ENCODE measurements at regions of chr3 and their contacts with region 1.

Region 1: DNA sequence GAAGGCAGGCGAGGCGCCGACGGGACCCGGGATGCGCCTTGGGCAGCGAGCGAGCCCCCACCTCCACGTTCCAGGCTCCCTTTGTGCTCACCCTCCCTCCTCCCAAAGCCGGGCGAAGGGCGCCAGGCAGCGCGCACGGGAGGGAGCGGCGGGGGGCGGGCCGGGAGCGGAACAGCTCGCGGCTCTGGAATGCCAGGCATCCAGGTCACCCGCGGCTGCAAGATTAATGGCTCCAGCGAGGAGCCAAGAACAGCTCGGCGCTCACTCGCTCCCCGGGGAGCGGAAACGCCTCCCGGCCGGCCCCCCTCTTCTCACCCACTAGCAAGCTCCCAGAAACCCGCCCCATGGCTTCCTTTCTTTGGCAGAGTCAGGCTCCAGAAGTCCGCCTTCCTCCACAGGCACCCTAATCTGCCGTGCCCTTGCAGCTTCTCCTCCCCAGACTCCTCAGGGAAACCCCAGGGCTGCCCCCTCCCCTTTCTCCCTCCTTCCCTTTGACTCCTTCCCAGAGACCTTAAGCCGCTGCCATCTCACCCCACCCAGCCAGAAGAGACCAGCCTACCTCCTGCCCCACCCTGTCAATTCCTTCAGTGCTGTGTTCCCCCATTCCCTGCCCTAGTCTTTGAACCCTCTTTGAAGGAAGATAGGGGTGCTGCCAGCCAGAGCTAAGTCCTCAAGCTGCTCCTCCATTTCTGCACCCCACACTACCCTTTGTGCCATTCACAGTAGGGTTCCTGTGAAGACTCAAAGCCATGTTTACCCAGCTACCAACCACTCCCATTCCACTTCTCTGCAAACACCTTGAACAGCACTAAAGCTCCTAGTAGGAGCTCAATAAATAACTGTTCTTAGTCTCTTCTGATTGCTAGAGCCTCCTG is 9.9 kb downstream of the AMOTL2 start:
- DNase-seq: peak; percentile 99
- H3K4me3 Mint-ChIP-seq: peak overlapping the region; percentile 43
- H3K27ac Mint-ChIP-seq: peak overlapping the region; percentile 53
- H3K4me1 Mint-ChIP-seq: peaks cover 70% of the 10 kb centered on the region
- H3K27me3 Mint-ChIP-seq: no peaks in the 10 kb centered on the region
- CTCF ChIP-seq: no peak

Region 2: GRCh38 chr3:134134240-134134639 is 230.1 kb before region 1 on chr3:
- CTCF ChIA-PET with region 1: no interaction called
- intact Hi-C with region 1: no loop called
- DNase-seq: no peak
- H3K4me3 Mint-ChIP-seq: no peak overlapping the region
- H3K27ac Mint-ChIP-seq: no peak overlapping the region
- H3K4me1 Mint-ChIP-seq: peaks cover 7% of the 10 kb centered on the region
- H3K27me3 Mint-ChIP-seq: no peaks in the 10 kb centered on the region
- CTCF ChIP-seq: no peak

Region 3: DNA sequence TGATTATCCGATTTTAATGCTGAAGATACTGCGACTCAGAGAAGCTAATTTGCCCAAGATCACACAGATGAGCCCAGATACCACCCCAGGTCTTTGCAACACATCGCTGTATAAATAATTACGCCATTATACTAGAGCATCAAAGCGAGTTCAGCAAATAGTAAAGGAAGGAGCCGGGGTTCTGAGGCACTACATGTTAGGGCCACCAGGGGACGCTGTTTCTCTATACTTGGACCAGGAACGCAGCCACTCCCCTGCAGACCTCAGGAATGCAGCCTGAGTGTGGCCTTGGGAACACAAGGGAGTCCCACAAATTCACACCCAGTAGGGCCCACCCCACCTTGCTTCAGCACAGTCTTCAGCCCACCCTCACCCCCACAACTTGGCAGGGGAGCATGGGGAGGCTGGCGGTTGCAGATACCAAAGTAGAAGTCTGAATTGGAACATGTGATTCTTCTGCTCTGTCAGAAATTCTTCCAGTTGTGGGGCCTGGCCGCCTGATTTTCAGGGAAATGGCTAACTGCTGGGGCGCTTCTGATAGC is 55.9 kb before region 1 on chr3:
- CTCF ChIA-PET with region 1: interaction called, 15 read pairs
- intact Hi-C with region 1: loop called (anchors 2 kb)
- DNase-seq: peak; percentile 95
- H3K4me3 Mint-ChIP-seq: peak overlapping the region; percentile 42
- H3K27ac Mint-ChIP-seq: peak overlapping the region; percentile 18
- H3K4me1 Mint-ChIP-seq: peaks cover 44% of the 10 kb centered on the region
- H3K27me3 Mint-ChIP-seq: peaks cover 14% of the 10 kb centered on the region
- CTCF ChIP-seq: peak; percentile 100

Region 4: GRCh38 chr3:134315286-134316106 is 48.8 kb before region 1 on chr3:
- CTCF ChIA-PET with region 1: interaction called, 15 read pairs
- intact Hi-C with region 1: loop called (anchors 2 kb)
- DNase-seq: no peak
- H3K4me3 Mint-ChIP-seq: no peak overlapping the region
- H3K27ac Mint-ChIP-seq: peak overlapping the region; percentile 51
- H3K4me1 Mint-ChIP-seq: peaks cover 68% of the 10 kb centered on the region
- H3K27me3 Mint-ChIP-seq: no peaks in the 10 kb centered on the region
- CTCF ChIP-seq: no peak

Region 5: DNA sequence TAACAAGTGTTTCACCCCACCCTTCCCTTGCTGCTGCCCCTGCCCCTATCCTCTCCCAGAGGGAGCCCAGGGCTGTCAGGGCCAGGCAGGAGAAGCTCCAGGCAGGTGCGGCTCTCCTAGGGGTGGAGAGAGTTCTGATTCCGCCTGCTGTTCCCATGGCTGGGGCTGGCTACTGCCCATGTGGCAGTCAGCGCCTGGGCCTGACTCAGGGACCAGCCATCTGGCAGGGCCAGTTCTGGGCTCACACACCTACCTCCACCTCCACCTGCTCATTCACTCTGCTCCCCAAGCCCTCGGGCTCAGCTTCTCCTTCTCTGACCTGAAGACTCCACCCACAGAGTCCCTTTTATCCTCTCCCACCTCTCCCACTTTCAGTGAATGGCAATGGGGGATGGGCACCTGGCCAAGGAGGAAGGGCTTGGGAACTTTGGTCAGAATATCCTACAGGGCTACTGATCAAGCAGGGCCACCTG is 13.4 kb before region 1 on chr3:
- CTCF ChIA-PET with region 1: interaction called, 15 read pairs
- intact Hi-C with region 1: no loop called
- DNase-seq: peak; percentile 93
- H3K4me3 Mint-ChIP-seq: peak overlapping the region; percentile 11
- H3K27ac Mint-ChIP-seq: peak overlapping the region; percentile 90
- H3K4me1 Mint-ChIP-seq: peaks cover 83% of the 10 kb centered on the region
- H3K27me3 Mint-ChIP-seq: no peaks in the 10 kb centered on the region
- CTCF ChIP-seq: no peak

Region 6: DNA sequence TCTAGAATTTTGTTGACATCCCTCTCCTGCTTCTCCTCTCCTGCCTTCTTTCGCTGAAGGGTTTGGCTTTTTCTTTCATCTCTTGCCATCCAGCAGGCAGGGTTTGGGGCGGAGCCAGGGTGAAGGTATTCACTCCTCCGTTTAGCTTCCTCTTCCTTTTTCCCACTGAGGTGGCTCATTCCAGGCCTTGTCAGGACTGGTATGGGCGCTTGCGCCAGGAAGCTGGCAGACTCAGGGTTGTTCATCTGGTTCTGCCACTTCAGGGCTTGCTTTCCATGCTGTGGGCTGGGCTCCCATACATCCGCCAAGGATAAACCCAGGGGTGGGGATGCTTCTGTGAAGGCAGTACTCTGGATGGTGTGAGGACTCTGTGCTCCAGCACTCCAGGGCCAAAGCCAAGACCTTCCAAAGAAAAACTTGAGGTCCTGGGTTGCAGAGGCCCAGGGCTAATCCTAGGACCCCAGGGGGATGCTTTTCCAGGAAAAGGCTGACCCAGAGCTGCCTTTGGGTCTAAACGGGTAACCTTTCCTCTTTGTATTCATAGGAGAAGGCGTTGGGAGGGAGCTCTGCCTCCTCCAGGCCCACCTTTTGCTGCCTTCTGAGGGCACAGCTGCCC is 17.6 kb after region 1 on chr3:
- CTCF ChIA-PET with region 1: interaction called, 35 read pairs
- intact Hi-C with region 1: no loop called
- DNase-seq: peak; percentile 98
- H3K4me3 Mint-ChIP-seq: peak overlapping the region; percentile 51
- H3K27ac Mint-ChIP-seq: peak overlapping the region; percentile 84
- H3K4me1 Mint-ChIP-seq: peaks cover 54% of the 10 kb centered on the region
- H3K27me3 Mint-ChIP-seq: no peaks in the 10 kb centered on the region
- CTCF ChIP-seq: no peak

Measured in Calu3 (cell line).